IMR-90 (cell line): ENCODE measurements at regions of chr5 and their contacts with region 1.

Region 1: DNA sequence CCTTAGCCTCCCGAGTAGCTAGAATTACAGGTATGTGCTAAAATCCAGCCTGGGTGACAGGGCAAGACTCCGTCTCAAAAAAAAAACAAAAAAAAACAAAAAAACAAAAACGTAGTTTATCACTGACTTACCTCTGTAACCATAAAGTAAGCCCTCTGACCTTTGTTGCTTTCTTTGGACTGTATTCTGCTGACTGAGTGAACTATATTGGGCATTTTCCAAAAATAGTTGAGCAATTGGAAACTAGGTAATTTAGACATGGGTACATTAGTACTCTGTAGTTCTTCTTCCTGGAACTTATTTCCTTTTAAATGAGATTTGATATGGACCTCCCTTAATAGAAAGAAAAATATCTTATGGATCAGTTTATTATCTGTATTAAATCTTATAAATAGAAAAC is 66.6 kb downstream of the ANKHD1 start:
- DNase-seq: no peak
- ATAC-seq: no peak
- H3K4me3 ChIP-seq: no peak overlapping the region
- H3K27ac ChIP-seq: no peak overlapping the region
- H3K4me1 ChIP-seq: no peaks in the 10 kb centered on the region
- H3K27me3 ChIP-seq: no peaks in the 10 kb centered on the region
- CTCF ChIP-seq: no peak
- POLR2A ChIP-seq: no peak
- RAD21 ChIP-seq: no peak

Region 2: GRCh38 chr5:139725073-139725830 is 742.9 kb before region 1 on chr5:
- CTCF ChIA-PET with region 1: no interaction called
- POLR2A ChIA-PET with region 1: no interaction called
- dilution Hi-C with region 1: no loop called
- in situ Hi-C with region 1: no loop called
- intact Hi-C with region 1: no loop called
- DNase-seq: peak; percentile 85
- ATAC-seq: peak; percentile 100
- H3K4me3 ChIP-seq: no peak overlapping the region
- H3K27ac ChIP-seq: peak overlapping the region; percentile 16; the same call in 1 of the 2 replicates
- H3K4me1 ChIP-seq: peaks cover 12% of the 10 kb centered on the region
- H3K27me3 ChIP-seq: no peaks in the 10 kb centered on the region
- CTCF ChIP-seq: no peak
- POLR2A ChIP-seq: no peak
- RAD21 ChIP-seq: no peak

Region 3: GRCh38 chr5:140509898-140510297 is 41.7 kb after region 1 on chr5:
- CTCF ChIA-PET with region 1: no interaction called
- POLR2A ChIA-PET with region 1: no interaction called
- dilution Hi-C with region 1: no loop called
- in situ Hi-C with region 1: no loop called
- intact Hi-C with region 1: loop called (anchors 5 kb)
- DNase-seq: no peak
- ATAC-seq: no peak
- H3K4me3 ChIP-seq: no peak overlapping the region
- H3K27ac ChIP-seq: no peak overlapping the region
- H3K4me1 ChIP-seq: no peaks in the 10 kb centered on the region
- H3K27me3 ChIP-seq: no peaks in the 10 kb centered on the region
- CTCF ChIP-seq: no peak
- POLR2A ChIP-seq: no peak
- RAD21 ChIP-seq: no peak